Body of pancreas (tissue), 4 donors: ENCODE measurements at regions of chr7 and their contacts with region 1.

Region 1: GRCh38 chr7:44348300-44348699 is 22.9 kb upstream of the CAMK2B start:
- DNase-seq: no peak
- ATAC-seq: no peak
- H3K4me3 ChIP-seq: no peak overlapping the region
- H3K27ac ChIP-seq: no peak overlapping the region
- H3K4me1 ChIP-seq: no peaks in the 10 kb centered on the region
- H3K27me3 ChIP-seq: no peaks in the 10 kb centered on the region
- CTCF ChIP-seq: no peak
- POLR2A ChIP-seq: no peak

Region 2: DNA sequence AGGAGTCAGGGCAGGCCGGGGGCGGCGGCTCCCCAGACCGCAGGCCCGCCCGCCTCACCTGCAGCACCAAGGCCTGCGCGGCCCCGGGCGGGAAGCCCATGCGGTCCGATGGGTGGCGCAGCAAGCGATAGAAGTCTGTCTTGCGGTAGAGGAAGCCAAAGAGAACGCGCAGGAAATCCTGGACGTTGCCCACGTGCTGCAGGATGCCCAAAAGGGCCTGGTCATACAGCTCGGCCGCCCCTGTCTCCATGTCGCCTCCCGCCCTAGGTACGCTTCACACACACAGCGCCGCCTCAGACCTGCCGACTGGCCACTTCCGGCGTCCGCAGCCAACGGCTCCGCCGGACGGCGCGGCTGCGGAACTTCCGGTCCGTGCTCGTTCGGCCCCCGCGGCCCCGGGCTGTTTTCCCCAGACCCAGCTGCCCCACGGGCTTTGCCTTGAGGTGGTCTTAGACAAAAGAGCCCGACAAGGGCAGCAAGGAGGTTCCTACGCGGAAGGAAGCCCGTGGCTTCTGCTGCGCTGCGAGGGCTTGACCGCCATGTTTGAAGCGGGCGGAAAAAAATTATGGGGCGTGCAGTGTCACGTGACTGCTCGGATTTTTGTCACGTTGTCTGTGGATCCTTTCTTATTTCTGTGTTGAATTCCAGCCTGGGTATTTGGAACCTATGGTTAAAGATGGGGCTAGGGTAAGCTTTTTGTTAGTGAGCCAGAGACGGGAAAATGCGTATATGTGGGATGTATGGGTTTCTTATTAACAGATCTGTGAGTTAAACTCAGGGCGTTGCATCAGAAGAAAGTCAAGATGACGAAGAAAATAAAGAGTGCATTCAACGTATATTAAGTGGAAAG is 142.3 kb after region 1 on chr7 and contains the start of gene NUDCD3:
- intact Hi-C with region 1: no loop called
- DNase-seq: peak; percentile 84 to 89 (median 87)
- ATAC-seq: peak; percentile 94
- H3K4me3 ChIP-seq: peak within 1 kb of the TSS; percentile 86 to 98
- H3K27ac ChIP-seq: peak within 1 kb of the TSS; percentile 81 to 99 (median 97)
- H3K4me1 ChIP-seq: peaks cover 41% of the 10 kb centered on the region
- H3K27me3 ChIP-seq: no peaks in the 10 kb centered on the region
- CTCF ChIP-seq: peak in 2 of 7 experiments; percentile 16 to 20
- POLR2A ChIP-seq: peak; percentile 24 to 74 (median 73)
- total RNA-seq, gene NUDCD3: 20.4 to 20.8 TPM

Region 3: DNA sequence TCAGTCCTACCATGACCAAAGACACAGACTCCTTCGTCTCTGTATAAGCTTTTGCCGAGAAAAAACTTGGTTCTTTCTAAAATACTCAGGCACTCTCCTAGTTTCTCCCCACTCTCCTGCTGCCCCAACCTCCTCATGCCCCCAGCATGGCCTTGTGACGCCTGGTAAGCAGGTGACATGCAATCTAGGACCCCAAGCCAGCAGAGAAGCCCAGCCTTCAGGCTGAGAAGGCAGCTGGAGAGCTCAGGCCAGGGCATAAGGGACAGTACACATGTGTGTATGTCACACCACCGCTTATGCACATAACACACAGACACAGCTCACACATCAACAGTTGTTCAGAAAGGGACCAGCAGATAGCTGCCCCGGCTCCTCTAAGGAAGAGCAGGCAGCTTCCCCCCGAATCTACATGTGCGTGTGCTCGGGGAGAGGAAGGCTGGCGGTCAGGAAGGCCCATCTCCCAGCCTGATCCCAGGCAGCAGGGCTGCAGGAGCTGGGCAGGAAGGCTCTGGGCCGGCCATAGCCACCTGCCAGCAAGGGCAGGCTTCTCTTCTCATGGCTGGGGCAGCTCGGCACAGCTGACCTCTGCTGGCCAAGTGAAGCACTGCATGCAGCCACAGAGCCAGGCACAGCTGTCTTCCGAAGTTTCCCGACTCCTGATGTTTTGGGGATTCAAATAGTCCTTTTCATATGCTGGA is 216.9 kb after region 1 on chr7:
- intact Hi-C with region 1: no loop called
- DNase-seq: peak; percentile 70 to 78 (median 74)
- ATAC-seq: peak; percentile 86
- H3K4me3 ChIP-seq: no peak overlapping the region
- H3K27ac ChIP-seq: no peak overlapping the region
- H3K4me1 ChIP-seq: peaks cover 7% of the 10 kb centered on the region
- H3K27me3 ChIP-seq: no peaks in the 10 kb centered on the region
- CTCF ChIP-seq: peak; percentile 91 to 97 (median 92)
- POLR2A ChIP-seq: no peak

Region 4: GRCh38 chr7:44727158-44727933 is 379.0 kb after region 1 on chr7:
- intact Hi-C with region 1: loop called (anchors 5 kb)
- DNase-seq: no peak
- ATAC-seq: no peak
- H3K4me3 ChIP-seq: no peak overlapping the region
- H3K27ac ChIP-seq: no peak overlapping the region
- H3K4me1 ChIP-seq: no peaks in the 10 kb centered on the region
- H3K27me3 ChIP-seq: no peaks in the 10 kb centered on the region
- CTCF ChIP-seq: no peak
- POLR2A ChIP-seq: no peak

Region 5: DNA sequence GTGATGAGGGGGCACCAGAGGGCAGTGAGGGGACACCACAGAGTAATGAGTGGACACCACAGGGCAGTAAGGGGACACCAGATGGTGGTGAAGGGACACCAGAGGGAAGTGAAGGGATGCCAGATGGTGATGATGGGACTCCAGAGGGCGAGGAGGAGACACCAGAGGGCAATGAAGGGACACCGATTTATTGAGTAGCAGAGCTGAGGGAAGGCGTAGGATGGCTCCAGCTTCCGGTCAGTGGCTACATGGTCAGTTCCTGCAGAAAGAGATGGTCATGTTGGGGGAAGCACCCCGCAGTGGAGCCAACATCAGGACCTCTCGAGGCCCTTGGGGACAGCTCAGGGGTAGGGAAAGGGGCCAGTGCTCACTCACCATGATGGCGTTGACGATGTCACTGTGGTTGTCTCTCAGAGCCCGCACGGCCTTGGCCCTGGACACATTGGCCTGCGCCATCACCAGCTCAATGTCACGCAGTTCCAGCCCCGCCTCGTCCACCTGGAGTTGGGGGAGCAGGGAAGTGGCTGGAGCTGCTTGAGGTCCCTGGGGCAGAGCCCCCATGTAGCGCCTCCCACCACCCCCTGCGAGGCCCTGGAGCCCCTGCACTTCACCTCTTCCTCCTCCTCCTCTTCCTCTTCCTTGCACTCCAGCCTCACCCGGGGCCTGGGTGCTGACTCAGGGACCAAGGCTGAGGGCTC is 732.1 kb after region 1 on chr7:
- intact Hi-C with region 1: no loop called
- DNase-seq: no peak
- ATAC-seq: no peak
- H3K4me3 ChIP-seq: no peak overlapping the region
- H3K27ac ChIP-seq: no peak overlapping the region
- H3K4me1 ChIP-seq: no peaks in the 10 kb centered on the region
- H3K27me3 ChIP-seq: no peaks in the 10 kb centered on the region
- CTCF ChIP-seq: no peak
- POLR2A ChIP-seq: no peak